A549 (cell line): ENCODE measurements at regions of chr11 and their contacts with region 1.

Region 1: GRCh38 chr11:64317957-64318693 is at the start of gene PRDX5:
- DNase-seq: peak; percentile 91 to 98
- ATAC-seq: peak; percentile 75 to 87
- H3K4me3 ChIP-seq: peak within 1 kb of the TSS; percentile 80
- H3K27ac ChIP-seq: peak within 1 kb of the TSS; percentile 97 to 98
- H3K4me1 ChIP-seq: peaks cover 14% of the 10 kb centered on the region
- CTCF ChIP-seq: peak; percentile 60
- EP300 ChIP-seq: no peak
- POLR2A ChIP-seq: peak; percentile 79
- RAD21 ChIP-seq: peak; percentile 69 to 81
- polyA plus RNA-seq, gene PRDX5: 305 and 377 TPM in 2 replicates

Region 2: DNA sequence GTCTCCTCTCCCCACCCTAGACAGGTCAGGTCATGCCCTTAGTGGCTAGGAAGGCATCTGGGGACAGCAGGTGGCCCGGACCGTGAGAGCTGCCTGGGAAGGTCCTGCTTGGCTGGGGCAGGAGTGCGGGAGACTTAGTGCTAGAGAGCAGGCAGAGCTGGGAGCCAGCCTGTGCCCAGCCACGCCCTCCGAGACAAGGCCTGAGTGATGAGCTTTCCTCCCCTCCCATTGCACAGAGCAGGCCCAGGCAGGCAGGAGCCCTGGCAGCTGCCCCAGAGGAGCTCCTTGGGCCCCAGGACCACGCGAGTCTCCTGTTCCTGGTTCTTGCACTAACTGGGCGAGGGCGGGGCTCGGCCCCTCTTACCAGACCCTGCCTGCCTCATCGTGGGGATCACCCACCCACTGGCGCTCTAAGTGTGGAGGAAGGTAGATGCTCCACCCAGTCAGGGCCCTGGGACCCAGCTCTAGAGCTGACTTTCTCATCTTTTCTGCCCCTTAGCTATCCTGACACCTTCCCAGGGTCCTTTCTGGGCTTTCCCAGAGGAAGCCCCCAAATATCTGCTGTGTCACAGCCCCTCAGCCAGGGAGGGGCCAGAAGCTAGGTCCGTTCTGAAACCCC is 197.1 kb before region 1 on chr11:
- CTCF ChIA-PET with region 1: no interaction called
- POLR2A ChIA-PET with region 1: no interaction called
- DNase-seq: peak in 1 of 2 experiments; percentile 26
- ATAC-seq: peak; percentile 66 to 81; a peak in 5 of 6 replicates
- H3K4me3 ChIP-seq: no peak overlapping the region
- H3K27ac ChIP-seq: peak overlapping the region in 1 of 2 experiments; percentile 13; a peak in 3 of 6 replicates
- H3K4me1 ChIP-seq: no peaks in the 10 kb centered on the region
- CTCF ChIP-seq: no peak
- EP300 ChIP-seq: no peak
- POLR2A ChIP-seq: no peak
- RAD21 ChIP-seq: no peak

Region 3: GRCh38 chr11:64269380-64270234 is 48.5 kb before region 1 on chr11:
- CTCF ChIA-PET with region 1: interaction called, 4 read pairs
- POLR2A ChIA-PET with region 1: interaction called, 15 read pairs
- DNase-seq: peak; percentile 87 to 100
- ATAC-seq: peak; percentile 80 to 91
- H3K4me3 ChIP-seq: peak overlapping the region; percentile 72
- H3K27ac ChIP-seq: peak overlapping the region; percentile 94 to 97
- H3K4me1 ChIP-seq: peaks cover 32% of the 10 kb centered on the region
- CTCF ChIP-seq: peak; percentile 12; the same call in 1 of the 3 replicates
- EP300 ChIP-seq: no peak
- POLR2A ChIP-seq: peak; percentile 32
- RAD21 ChIP-seq: no peak

Region 4: DNA sequence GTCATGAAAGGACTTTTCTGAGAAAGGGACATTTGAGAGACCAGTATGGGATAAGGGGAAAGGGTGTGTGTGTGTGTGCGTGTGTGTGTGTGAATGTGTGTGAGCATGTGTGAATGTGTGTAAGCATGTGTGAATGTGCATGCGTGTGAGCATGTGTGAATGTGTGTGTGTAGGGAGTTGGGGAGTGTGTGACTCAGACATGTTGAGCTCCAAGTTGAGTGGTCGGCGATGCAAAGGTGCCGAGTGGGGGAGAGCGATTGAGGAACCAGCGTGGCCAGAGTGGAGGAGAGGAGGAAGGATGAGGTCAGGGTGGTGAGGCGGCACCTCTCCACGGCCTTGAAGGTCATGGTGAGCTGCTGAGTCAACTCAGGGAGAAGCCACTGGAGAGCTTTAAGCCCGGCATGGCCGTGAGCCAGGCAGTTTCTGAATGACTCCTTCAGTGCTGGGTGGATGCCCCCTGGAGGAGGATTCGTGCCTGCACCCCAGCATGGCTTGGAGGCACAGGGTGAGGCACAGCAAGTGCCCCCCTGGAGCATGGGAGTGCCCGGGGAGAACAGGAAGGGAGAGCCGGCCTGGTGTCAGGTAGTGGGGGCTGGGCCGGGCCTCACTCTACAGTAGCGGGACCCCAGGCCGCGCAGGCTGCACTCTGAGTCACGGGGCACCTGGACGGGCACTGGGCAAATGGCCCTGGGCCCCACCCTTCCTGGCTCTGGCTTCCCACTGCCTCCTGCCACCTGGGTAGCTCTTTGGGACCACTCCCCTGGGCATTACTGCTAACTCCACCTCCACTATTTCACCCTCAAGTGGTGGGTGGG is 13.6 kb after region 1 on chr11:
- CTCF ChIA-PET with region 1: interaction called, 996 read pairs
- POLR2A ChIA-PET with region 1: interaction called, 45 read pairs
- DNase-seq: peak; percentile 92 to 93
- ATAC-seq: peak; percentile 77 to 89
- H3K4me3 ChIP-seq: no peak overlapping the region
- H3K27ac ChIP-seq: peak overlapping the region; percentile 85 to 91
- H3K4me1 ChIP-seq: peaks cover 36% of the 10 kb centered on the region
- CTCF ChIP-seq: peak; percentile 65
- EP300 ChIP-seq: peak in 1 of 2 experiments; percentile 47; a peak in 1 of 5 replicates
- POLR2A ChIP-seq: 0 out of 2 replicates have a peak, but pooled peaks have one; percentile 1
- RAD21 ChIP-seq: peak; percentile 65 to 66

Region 5: DNA sequence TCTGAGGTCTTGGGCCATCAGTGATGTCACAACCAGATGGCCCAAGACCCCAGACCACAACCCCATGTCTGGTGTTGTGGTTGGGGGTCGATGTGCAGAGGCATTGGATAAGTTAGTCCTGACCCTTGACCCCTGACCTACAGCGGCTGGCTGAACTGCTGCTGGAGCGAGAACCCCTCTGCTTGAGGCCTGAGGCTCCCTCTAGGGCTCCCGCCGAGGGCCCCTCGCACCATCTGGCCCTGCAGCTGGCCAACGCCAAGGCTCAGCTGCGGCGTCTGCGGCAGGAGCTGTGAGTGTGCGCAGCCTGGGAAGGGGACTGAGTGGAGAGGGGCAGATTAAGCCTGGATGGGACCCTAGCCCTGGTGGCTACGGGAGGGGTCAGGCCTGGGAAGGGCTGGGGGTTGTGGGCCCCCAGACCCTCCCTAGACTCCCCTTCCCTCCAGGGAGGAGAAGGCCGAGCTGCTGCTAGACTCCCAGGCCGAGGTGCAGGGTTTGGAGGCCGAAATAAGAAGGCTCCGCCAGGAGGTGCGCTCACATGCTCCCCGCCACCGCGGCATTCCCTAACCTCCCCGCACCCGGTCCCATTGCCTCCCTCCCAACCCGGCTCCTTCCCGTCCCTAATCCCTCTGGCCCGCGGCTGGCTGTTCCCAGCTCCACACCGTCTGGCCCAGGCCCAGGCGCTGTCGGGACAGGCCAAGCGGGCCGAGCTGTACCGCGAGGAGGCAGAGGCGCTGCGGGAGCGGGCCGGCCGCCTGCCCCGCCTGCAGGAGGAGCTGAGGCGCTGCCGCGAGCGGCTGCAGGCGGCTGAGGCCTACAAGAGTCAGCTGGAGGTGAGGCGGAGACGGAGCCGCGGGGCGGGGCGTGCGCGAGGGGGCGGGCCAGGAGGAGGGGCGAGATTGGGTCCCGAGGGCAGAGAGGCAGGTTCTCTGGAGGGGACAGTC is 24.0 kb after region 1 on chr11:
- CTCF ChIA-PET with region 1: interaction called, 996 read pairs
- POLR2A ChIA-PET with region 1: interaction called, 24 read pairs
- DNase-seq: peak; percentile 91 to 93
- ATAC-seq: peak; percentile 87 to 93
- H3K4me3 ChIP-seq: peak overlapping the region; percentile 38
- H3K27ac ChIP-seq: peak overlapping the region; percentile 88 to 93
- H3K4me1 ChIP-seq: peaks cover 18% of the 10 kb centered on the region
- CTCF ChIP-seq: peak; percentile 43
- EP300 ChIP-seq: no peak
- POLR2A ChIP-seq: peak; percentile 85
- RAD21 ChIP-seq: peak; percentile 27 to 44; a peak in 3 of 5 replicates

Region 6: DNA sequence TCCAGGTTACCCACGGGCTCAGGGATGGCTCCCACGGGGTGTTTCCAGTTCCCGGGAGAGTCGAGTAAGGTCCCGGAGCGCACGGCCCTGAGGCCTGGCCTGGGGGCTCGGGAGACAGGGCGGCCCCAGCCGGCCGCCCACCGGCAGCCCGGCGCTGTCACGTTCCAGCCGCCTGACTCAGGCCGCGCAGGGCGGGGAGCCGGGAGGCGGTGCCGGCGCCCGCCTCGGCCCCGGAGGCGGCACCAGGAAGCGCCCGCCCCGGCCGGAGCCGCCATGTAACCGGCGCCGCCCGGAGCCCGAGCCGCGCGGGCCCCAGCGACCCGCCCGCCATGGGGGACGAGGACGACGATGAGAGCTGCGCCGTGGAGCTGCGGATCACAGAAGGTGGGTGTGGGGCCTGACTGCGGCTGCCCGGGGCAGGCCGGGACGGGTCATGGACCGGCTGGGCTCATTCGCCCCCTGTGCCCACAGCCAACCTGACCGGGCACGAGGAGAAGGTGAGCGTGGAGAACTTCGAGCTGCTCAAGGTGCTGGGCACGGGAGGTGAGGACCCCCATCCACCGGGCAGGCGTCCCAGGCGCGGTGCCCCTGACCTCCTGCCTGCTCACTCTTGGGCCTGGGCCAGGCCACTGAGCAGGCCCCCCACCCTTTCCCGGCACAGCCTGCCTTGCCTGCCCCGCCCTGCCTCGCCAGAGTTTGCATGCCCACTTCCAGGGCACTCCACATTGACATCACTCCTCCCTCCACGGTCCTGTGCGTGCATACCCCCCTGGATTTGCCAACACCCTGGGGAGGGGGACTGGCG is 41.0 kb after region 1 on chr11 and contains the start of gene RPS6KA4:
- CTCF ChIA-PET with region 1: interaction called, 996 read pairs
- POLR2A ChIA-PET with region 1: interaction called, 50 read pairs
- DNase-seq: peak; percentile 47 to 71
- ATAC-seq: peak; percentile 70 to 80
- H3K4me3 ChIP-seq: peak within 1 kb of the TSS; percentile 73
- H3K27ac ChIP-seq: peak within 1 kb of the TSS; percentile 86 to 98
- H3K4me1 ChIP-seq: peaks cover 50% of the 10 kb centered on the region
- CTCF ChIP-seq: no peak
- EP300 ChIP-seq: no peak
- POLR2A ChIP-seq: peak; percentile 64
- RAD21 ChIP-seq: no peak
- polyA plus RNA-seq, gene RPS6KA4: 19.1 and 21.4 TPM in 2 replicates

Region 7: GRCh38 chr11:64458997-64459396 is 140.9 kb after region 1 on chr11:
- CTCF ChIA-PET with region 1: no interaction called
- POLR2A ChIA-PET with region 1: no interaction called
- DNase-seq: no peak
- ATAC-seq: no peak
- H3K4me3 ChIP-seq: no peak overlapping the region
- H3K27ac ChIP-seq: no peak overlapping the region
- H3K4me1 ChIP-seq: no peaks in the 10 kb centered on the region
- CTCF ChIP-seq: no peak
- EP300 ChIP-seq: no peak
- POLR2A ChIP-seq: no peak
- RAD21 ChIP-seq: no peak